ACHN (cell line): ENCODE measurements at regions of chr5 and their contacts with region 1.

Region 1: GRCh38 chr5:14727428-14727865 is 62.9 kb downstream of the OTULIN start:
- DNase-seq: peak; percentile 67

Region 2: GRCh38 chr5:14560091-14560595 is 167.3 kb before region 1 on chr5:
- in situ Hi-C with region 1: no loop called
- DNase-seq: no peak

Region 3: GRCh38 chr5:15003511-15003920 is 276.1 kb after region 1 on chr5:
- in situ Hi-C with region 1: loop called (anchors 10 kb)
- DNase-seq: peak; percentile 57